AG04450 (cell line): ENCODE measurements at regions of chr3 and their contacts with region 1.

Region 1: DNA sequence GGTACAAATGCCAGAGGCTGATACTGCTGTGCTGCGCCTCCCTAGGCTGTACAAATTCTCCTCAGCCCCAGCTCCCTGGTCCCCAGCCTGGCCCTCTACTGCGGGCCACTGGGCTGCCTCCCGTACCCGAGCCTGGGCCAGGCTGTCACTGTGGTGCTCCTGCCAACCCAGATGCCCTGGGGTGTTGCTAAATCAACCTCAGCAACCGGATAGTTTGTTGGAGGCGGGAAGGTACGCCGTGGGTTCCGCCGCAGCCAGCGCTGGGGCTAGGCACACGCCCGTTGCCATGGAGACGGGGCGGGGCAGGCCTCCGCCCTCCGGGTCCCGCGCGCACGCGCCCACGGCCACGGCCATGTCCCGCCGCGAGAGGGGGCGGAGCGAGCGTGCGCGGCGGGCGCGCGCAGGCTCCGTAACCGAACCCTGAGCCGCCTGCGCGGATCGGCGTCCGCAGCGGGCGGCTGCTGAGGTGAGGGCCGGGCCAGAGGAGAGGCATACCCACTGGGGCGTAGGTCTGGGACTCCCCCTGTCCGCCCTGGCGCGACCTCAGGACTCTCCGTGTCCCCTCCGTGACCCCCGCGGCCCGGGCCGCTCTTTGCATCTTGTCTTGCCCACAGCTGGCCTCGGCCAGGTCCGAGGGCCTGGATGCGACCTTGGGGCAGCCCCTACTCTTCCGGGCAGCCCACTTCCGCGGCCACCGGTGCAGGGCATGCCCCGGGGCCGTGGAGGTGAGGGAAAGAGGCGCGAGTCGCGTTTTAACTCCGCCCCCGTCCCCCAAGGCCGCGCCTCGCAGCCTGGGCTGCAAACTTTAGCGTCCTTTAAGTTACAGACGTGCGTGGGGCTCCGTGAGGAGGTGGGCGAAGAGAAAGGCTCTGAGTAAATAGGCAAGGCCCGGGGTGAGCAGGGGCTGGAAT is at the start of gene TEX264:
- DNase-seq: no peak
- H3K4me3 ChIP-seq: peak within 1 kb of the TSS; percentile 81
- H3K27ac ChIP-seq: no peak within 1 kb of the TSS
- H3K27me3 ChIP-seq: no peaks in the 10 kb centered on the region
- CTCF ChIP-seq: no peak
- polyA plus RNA-seq, gene TEX264: 40.6 and 49.9 TPM in 2 replicates

Region 2: DNA sequence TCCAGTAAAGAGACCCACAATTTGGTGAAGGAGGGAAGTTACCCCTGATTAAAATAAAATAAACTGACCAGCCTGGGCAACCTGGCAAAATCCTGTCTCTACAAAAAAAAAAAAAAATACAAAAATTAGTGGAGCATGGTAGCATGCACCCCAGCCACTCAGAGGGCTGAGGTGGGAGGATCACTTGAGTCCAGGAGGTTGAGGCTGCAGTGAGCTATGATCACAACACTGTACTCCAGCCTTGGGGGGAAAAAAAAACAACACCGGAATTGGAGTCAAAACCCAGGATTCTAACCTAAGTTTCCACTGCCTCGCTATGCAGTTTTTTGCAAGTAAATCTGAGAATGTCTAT is 193.7 kb before region 1 on chr3:
- CTCF ChIA-PET with region 1: no interaction called
- POLR2A ChIA-PET with region 1: interaction called, 10 read pairs
- DNase-seq: no peak
- H3K4me3 ChIP-seq: no peak overlapping the region
- H3K27ac ChIP-seq: no peak overlapping the region
- H3K27me3 ChIP-seq: no peaks in the 10 kb centered on the region
- CTCF ChIP-seq: no peak

Region 3: GRCh38 chr3:51538459-51539290 is 132.4 kb before region 1 on chr3 and contains the start of gene RAD54L2:
- CTCF ChIA-PET with region 1: interaction called, 13 read pairs
- POLR2A ChIA-PET with region 1: no interaction called
- DNase-seq: peak; percentile 59
- H3K4me3 ChIP-seq: peak within 1 kb of the TSS; percentile 79
- H3K27ac ChIP-seq: peak within 1 kb of the TSS; percentile 89
- H3K27me3 ChIP-seq: no peaks in the 10 kb centered on the region
- CTCF ChIP-seq: no peak; the same call in 1 of the 2 replicates
- polyA plus RNA-seq, gene RAD54L2: 8.1 and 9.6 TPM in 2 replicates

Region 4: DNA sequence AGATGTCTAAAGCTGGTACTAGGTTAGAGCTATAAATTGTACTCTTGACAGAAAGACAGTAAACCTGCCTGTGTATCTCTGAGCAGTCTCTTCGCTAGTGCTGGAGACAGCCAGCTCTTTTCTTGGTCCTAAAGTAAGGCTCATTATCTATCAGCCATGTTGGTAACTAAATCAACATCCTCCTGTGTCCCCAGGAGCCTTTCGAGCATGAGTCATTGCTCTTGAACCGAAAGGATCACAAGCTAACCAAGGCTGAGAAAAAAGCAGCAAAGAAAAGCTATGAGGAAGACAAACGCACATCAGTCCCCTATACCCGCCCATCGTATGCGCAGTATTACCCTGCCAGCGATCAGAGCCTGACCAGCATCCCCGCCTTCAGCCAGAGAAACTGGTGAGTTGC is 25.0 kb before region 1 on chr3:
- CTCF ChIA-PET with region 1: interaction called, 30 read pairs
- POLR2A ChIA-PET with region 1: no interaction called
- DNase-seq: no peak
- H3K4me3 ChIP-seq: no peak overlapping the region
- H3K27ac ChIP-seq: no peak overlapping the region
- H3K27me3 ChIP-seq: no peaks in the 10 kb centered on the region
- CTCF ChIP-seq: no peak

Region 5: GRCh38 chr3:51682079-51682478 is 11.0 kb after region 1 on chr3:
- CTCF ChIA-PET with region 1: interaction called, 51 read pairs
- POLR2A ChIA-PET with region 1: no interaction called
- DNase-seq: peak; percentile 67
- H3K4me3 ChIP-seq: no peak overlapping the region
- H3K27ac ChIP-seq: no peak overlapping the region
- H3K27me3 ChIP-seq: no peaks in the 10 kb centered on the region
- CTCF ChIP-seq: peak; percentile 90